ENCODE measurements at regions of chr17 and their contacts with region 1.

Region 1: DNA sequence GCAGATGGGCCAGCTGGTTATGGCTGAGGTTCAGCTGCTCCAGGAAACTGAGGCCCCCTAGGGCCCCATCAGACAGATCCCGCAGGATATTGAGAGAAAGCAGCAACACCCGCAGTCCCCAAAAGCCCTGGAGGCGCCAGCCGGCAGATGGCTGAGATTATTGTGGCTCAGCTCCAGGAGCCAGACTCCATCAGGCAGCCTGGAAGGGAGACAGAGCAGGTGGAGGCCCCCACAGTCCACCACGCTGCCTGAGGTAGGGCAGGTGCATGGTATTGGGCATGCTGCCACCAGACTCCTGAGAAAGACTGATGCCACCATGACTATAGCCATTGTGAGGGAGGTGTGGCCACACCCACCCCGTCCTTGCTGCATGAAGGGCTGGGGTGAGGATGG is 9.5 kb upstream of the TMEM101 start:
- DNase-seq: no peak
- CTCF ChIP-seq: no peak

Region 2: GRCh38 chr17:44001461-44001920 is 22.8 kb before region 1 on chr17:
- CTCF ChIA-PET with region 1: no interaction called
- POLR2A ChIA-PET with region 1: no interaction called
- DNase-seq: no peak
- CTCF ChIP-seq: no peak

Region 3: GRCh38 chr17:44044067-44044466 is 19.8 kb after region 1 on chr17:
- CTCF ChIA-PET with region 1: interaction called, 17 read pairs
- POLR2A ChIA-PET with region 1: no interaction called
- DNase-seq: no peak
- CTCF ChIP-seq: no peak

Measured in GM10248 (cell line).